OCI-LY7 (cell line): ENCODE measurements at regions of chr3 and their contacts with region 1.

Region 1: DNA sequence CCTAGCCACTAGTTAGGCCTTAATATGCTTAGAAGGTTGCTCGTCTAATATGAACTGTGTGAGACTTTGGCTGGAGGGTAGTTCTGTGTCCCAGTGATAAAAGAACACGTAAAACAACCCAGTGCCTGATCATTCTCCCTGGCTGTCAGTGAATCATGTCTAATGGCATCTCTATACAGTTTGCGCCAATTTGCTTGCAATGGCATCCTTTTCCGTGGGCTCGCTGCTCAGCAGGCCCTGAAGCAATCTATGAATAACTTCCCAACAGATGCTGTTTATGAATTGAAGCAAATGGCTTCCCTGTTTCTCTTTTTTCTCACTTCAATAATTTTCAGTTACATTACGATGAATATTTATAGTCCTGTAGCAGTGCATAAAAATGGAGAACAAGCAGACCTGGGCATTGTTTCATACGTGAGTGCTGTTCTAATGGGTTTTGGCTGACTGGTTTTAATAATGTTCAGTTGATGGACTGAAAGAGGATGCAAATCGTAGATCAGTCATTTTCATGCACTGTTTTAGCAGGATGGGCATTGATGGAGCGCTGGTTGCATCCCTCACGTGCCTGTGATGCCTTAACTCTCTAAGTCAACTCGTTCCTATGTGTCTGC is 243.4 kb upstream of the SUCLG2 start:
- DNase-seq: peak; percentile 95
- H3K4me3 ChIP-seq: peak overlapping the region; percentile 42
- H3K27ac ChIP-seq: peak overlapping the region; percentile 99
- H3K4me1 ChIP-seq: peaks cover 73% of the 10 kb centered on the region
- CTCF ChIP-seq: no peak

Region 2: GRCh38 chr3:67685499-67685898 is 212.3 kb before region 1 on chr3:
- CTCF ChIA-PET with region 1: no interaction called
- POLR2A ChIA-PET with region 1: no interaction called
- intact Hi-C with region 1: loop called (anchors 5 kb)
- DNase-seq: peak; percentile 88
- H3K4me3 ChIP-seq: peak overlapping the region; percentile 51
- H3K27ac ChIP-seq: peak overlapping the region; percentile 96
- H3K4me1 ChIP-seq: peaks cover 57% of the 10 kb centered on the region
- CTCF ChIP-seq: no peak

Region 3: GRCh38 chr3:68009900-68010299 is 112.1 kb after region 1 on chr3:
- CTCF ChIA-PET with region 1: no interaction called
- POLR2A ChIA-PET with region 1: no interaction called
- intact Hi-C with region 1: loop called (anchors 5 kb)
- DNase-seq: no peak
- H3K4me3 ChIP-seq: no peak overlapping the region
- H3K27ac ChIP-seq: no peak overlapping the region
- H3K4me1 ChIP-seq: no peaks in the 10 kb centered on the region
- CTCF ChIP-seq: no peak